Activated B cell treated with CpG ODN at 0.5 μM for 24 hours (primary cell): ENCODE measurements at regions of chr4 and their contacts with region 1.

Region 1: DNA sequence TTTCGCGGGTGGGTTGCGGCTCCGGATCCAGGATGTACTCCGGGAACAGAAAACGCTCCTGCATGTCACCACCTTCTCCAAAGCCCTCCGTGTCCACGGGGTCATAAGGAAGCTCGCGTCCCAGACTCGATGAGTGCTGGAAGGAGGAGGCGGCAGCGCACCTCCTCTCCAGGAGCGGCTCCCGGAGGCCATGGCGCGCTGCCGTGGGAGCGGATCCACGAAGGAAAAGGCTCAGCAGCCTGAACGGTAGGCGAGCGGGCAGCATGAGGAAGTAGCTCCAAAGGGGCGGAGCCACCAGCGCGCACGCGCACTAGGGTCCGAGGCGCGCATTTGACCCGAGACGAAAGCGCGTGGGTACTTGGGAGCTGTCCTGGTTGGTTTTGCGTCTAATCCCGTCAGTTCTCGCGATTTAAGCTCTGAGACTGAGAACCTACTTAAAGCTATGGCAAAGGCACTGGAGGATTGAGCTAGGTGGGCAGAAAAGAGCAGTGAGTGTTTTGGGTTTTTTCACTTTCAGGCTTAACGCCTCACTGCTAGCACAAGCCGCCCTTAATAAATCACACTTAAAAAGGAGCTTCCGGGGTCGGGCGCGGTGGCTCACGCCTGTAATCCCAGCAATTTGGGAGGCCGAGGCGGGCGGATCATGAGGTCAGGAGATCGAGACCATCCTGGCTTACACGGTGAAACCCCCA is at the start of gene NOA1:
- DNase-seq: peak; percentile 98
- ATAC-seq: peak; percentile 86
- H3K4me3 Mint-ChIP-seq: peak within 1 kb of the TSS; percentile 99
- H3K27ac Mint-ChIP-seq: peak within 1 kb of the TSS; percentile 96
- H3K4me1 Mint-ChIP-seq: peaks cover 70% of the 10 kb centered on the region
- H3K27me3 Mint-ChIP-seq: no peaks in the 10 kb centered on the region
- CTCF ChIP-seq: no peak
- total RNA-seq, gene NOA1: 24.1 and 25.0 TPM in 2 replicates

Region 2: DNA sequence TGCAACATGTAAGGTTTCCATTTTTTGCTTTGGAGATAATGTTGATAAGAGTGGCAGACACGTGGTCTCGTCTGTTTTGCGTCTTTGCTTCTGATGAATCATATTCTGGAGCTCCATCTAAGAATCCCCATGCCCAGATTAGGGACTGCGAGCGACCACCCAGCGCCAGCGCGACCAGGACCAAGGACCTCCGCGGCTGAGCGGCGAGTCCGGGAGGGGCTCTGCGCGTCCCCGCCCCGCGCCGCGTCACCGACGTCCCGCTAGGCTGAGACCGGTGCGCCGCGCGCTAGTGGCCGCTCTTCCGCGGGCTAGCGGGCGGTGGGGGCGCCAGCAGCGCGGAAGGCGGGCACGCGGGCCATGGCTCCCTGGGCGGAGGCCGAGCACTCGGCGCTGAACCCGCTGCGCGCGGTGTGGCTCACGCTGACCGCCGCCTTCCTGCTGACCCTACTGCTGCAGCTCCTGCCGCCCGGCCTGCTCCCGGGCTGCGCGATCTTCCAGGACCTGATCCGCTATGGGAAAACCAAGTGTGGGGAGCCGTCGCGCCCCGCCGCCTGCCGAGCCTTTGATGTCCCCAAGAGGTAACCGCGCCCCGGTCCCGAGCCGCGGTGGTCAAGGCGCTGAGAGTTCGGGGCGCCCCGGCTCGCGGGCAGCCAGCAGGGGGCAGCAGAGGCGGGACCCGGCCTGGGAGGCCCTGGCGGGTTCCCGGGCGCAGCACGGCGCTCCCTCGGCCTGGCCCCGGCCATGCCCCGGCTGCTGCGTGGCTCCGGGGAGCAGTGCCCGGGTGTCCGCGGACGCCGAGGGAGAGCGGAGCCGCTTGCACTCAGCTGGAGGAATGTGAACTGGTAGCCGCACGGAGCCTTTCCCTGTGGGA is 1631.3 kb before region 1 on chr4 and contains the start of gene SRD5A3:
- CTCF ChIA-PET with region 1: no interaction called
- POLR2A ChIA-PET with region 1: no interaction called
- intact Hi-C with region 1: loop called (anchors 1 kb)
- DNase-seq: peak; percentile 87
- ATAC-seq: peak; percentile 89
- H3K4me3 Mint-ChIP-seq: peak within 1 kb of the TSS; percentile 93
- H3K27ac Mint-ChIP-seq: peak within 1 kb of the TSS; percentile 94
- H3K4me1 Mint-ChIP-seq: peaks cover 13% of the 10 kb centered on the region
- H3K27me3 Mint-ChIP-seq: peaks cover under 1% of the 10 kb centered on the region
- CTCF ChIP-seq: no peak
- total RNA-seq, gene SRD5A3: 4.5 and 5.7 TPM in 2 replicates

Region 3: GRCh38 chr4:55866973-55867574 is 1110.4 kb before region 1 on chr4:
- CTCF ChIA-PET with region 1: no interaction called
- POLR2A ChIA-PET with region 1: no interaction called
- intact Hi-C with region 1: loop called (anchors 5 kb)
- DNase-seq: no peak
- ATAC-seq: peak; percentile 84
- H3K4me3 Mint-ChIP-seq: no peak overlapping the region
- H3K27ac Mint-ChIP-seq: no peak overlapping the region
- H3K4me1 Mint-ChIP-seq: peaks cover 22% of the 10 kb centered on the region
- H3K27me3 Mint-ChIP-seq: no peaks in the 10 kb centered on the region
- CTCF ChIP-seq: no peak

Region 4: DNA sequence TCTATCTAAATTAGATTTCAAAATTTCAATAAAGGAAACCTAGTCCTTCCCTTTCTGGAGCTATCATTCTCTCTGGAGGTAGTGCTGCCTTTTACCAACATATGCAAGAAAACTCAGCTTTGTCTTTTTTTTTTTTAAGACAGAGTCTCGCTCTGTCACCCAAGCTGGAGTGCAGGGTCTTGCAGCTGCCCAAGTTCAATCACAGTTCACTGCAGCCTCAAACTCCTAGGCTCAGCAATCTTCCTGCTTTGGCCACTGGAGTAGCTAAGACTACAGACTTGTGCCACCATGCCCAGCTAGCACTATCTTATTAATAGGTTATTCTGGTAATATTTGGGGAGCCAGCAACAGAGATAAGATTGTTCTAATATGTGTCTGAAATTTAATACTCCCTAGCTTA is 602.5 kb before region 1 on chr4:
- CTCF ChIA-PET with region 1: no interaction called
- POLR2A ChIA-PET with region 1: no interaction called
- intact Hi-C with region 1: no loop called
- DNase-seq: no peak
- ATAC-seq: no peak
- H3K4me3 Mint-ChIP-seq: no peak overlapping the region
- H3K27ac Mint-ChIP-seq: no peak overlapping the region
- H3K4me1 Mint-ChIP-seq: no peaks in the 10 kb centered on the region
- H3K27me3 Mint-ChIP-seq: no peaks in the 10 kb centered on the region
- CTCF ChIP-seq: no peak

Region 5: DNA sequence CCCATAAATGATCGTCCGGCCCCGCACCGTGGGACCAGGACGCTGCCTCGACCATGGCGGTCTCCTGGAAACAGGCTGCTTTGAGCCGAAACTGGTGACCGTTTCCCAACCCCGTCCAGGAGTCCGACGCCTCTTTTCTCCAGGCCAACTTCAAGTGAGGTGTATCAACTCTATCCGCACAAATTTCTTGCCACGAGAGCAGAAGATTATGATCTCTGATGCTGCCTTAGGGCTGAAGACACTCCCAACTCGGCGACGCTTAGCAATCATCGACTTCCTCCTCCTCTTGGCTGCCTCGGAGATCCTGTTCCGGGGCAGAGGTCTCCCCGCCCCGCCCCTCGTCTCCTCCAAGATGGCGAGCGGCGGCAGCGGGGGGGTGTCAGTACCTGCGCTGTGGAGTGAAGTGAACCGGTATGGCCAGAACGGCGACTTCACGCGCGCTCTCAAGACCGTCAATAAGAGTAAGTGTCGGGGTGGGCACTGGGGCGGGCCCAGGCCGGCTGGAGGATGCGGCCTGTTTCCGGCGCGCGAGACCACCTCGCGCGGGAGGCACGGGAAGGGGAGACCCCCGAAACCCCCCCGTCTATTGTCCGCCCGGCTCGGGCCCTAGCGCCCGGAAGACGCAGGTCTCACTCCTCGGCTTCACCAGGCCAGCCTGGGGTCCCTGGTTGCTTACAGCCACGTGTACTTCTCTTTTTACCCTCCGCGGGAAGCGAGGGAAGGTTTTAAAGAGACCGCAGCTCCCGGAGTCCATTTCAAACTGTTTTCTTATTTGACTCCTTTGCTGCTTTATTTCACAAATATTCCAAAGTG is 510.0 kb before region 1 on chr4 and contains the start of gene SRP72:
- CTCF ChIA-PET with region 1: no interaction called
- POLR2A ChIA-PET with region 1: interaction called, 4 read pairs
- intact Hi-C with region 1: loop called (anchors 1 kb)
- DNase-seq: peak; percentile 83
- ATAC-seq: peak; percentile 96
- H3K4me3 Mint-ChIP-seq: peak within 1 kb of the TSS; percentile 99
- H3K27ac Mint-ChIP-seq: peak within 1 kb of the TSS; percentile 96
- H3K4me1 Mint-ChIP-seq: peaks cover 57% of the 10 kb centered on the region
- H3K27me3 Mint-ChIP-seq: no peaks in the 10 kb centered on the region
- CTCF ChIP-seq: no peak
- total RNA-seq, gene SRP72: 139 TPM in 2 replicates

Region 6: DNA sequence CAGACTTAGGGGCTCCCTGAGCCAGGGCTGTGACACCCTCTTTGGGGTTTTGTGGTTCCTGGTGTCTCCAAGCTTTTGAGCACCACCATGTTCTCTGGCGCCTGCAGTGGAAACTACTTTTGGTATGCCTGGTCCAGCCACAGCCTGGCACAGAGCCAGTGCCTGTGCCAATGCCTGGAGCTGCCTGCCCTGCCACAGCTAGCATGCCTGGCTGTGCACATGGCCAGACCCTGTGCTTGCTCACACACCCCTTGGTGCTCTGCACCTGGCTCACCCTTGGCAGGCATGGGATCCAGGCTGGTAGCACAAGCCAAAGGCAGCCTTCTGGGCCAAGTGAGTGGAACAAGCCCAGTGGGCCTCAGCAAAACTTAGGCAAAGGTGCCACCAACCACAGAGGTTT is 265.4 kb before region 1 on chr4:
- CTCF ChIA-PET with region 1: no interaction called
- POLR2A ChIA-PET with region 1: no interaction called
- intact Hi-C with region 1: no loop called
- DNase-seq: no peak
- ATAC-seq: no peak
- H3K4me3 Mint-ChIP-seq: no peak overlapping the region
- H3K27ac Mint-ChIP-seq: no peak overlapping the region
- H3K4me1 Mint-ChIP-seq: peaks cover 6% of the 10 kb centered on the region
- H3K27me3 Mint-ChIP-seq: peaks cover 2% of the 10 kb centered on the region
- CTCF ChIP-seq: no peak

Region 7: DNA sequence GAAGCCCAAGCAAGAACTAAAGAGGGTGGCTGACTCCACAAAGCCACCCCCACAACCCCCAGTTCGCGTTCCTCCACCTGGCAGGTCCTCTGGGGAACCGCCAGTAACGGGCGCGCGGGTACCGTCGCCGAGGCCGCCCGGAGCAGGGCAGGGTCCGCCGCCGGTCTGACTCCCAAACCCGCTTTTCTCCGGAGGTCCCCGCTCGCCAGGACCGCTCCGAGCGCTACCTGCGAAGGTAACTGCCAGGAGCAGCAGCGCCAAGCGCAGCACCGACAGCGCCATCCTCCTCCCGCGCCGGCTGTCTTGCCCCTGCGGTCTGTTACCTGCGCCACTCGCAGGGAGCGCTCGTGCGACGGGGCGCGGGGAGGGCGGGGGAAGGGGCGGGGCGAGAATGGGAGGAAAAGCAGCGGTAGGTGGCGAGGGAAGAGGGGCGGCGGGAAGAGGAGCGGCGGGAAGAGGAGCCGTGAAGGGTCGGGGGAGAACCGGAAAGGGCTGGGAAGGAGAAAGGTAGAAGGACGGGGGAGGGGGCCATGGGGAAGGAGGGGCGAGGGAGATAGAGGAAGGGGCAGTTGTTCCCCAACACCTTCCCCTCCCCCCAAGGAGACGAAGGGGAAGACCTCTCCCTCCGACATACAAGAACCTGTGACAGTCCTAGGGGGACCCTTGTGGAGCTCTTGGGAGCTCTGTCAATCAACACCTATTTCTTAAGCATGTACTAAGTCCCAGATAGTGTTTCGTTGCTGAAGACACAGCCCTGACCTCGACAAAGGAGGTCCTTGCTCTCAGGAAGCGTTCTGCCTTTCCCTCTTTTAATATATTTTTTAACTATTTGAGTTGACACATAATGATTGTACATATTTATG is 155.9 kb before region 1 on chr4 and contains the start of gene SPINK2:
- CTCF ChIA-PET with region 1: no interaction called
- POLR2A ChIA-PET with region 1: no interaction called
- intact Hi-C with region 1: loop called (anchors 5 kb)
- DNase-seq: peak; percentile 58
- ATAC-seq: peak; percentile 87
- H3K4me3 Mint-ChIP-seq: peak within 1 kb of the TSS; percentile 81
- H3K27ac Mint-ChIP-seq: peak within 1 kb of the TSS; percentile 24
- H3K4me1 Mint-ChIP-seq: peaks cover 31% of the 10 kb centered on the region
- H3K27me3 Mint-ChIP-seq: no peaks in the 10 kb centered on the region
- CTCF ChIP-seq: no peak
- total RNA-seq, gene SPINK2: 1.2 TPM in 1 of 2 replicates, not detected in the other

Region 8: GRCh38 chr4:56999751-57000150 is 22.3 kb after region 1 on chr4:
- CTCF ChIA-PET with region 1: no interaction called
- POLR2A ChIA-PET with region 1: no interaction called
- intact Hi-C with region 1: no loop called
- DNase-seq: no peak
- ATAC-seq: no peak
- H3K4me3 Mint-ChIP-seq: no peak overlapping the region
- H3K27ac Mint-ChIP-seq: no peak overlapping the region
- H3K4me1 Mint-ChIP-seq: no peaks in the 10 kb centered on the region
- H3K27me3 Mint-ChIP-seq: no peaks in the 10 kb centered on the region
- CTCF ChIP-seq: no peak

Region 9: DNA sequence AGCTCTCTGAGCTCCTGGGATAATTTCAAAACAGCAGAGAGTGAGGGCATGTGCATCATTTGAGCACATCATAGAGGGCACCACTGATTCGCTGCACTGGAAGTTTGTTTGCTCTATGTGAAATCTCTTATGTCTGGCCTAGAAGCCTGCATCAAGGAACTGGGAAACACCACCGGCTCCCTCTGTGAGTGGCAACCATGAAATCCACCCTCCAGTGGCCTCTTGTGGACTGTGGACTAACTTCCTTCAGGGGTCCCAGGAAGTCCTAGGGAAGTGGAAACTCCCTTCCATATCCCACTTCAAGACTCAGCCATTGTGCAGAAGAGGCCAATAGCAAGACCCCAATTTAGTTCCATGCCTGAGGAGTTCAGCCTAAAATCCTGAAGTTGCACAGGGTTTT is 180.8 kb after region 1 on chr4:
- CTCF ChIA-PET with region 1: no interaction called
- POLR2A ChIA-PET with region 1: no interaction called
- intact Hi-C with region 1: no loop called
- DNase-seq: no peak
- ATAC-seq: no peak
- H3K4me3 Mint-ChIP-seq: no peak overlapping the region
- H3K27ac Mint-ChIP-seq: no peak overlapping the region
- H3K4me1 Mint-ChIP-seq: peaks cover 1% of the 10 kb centered on the region
- H3K27me3 Mint-ChIP-seq: peaks cover 10% of the 10 kb centered on the region
- CTCF ChIP-seq: no peak